MCF 10A (cell line): ENCODE measurements at regions of chr21 and their contacts with region 1.

Region 1: DNA sequence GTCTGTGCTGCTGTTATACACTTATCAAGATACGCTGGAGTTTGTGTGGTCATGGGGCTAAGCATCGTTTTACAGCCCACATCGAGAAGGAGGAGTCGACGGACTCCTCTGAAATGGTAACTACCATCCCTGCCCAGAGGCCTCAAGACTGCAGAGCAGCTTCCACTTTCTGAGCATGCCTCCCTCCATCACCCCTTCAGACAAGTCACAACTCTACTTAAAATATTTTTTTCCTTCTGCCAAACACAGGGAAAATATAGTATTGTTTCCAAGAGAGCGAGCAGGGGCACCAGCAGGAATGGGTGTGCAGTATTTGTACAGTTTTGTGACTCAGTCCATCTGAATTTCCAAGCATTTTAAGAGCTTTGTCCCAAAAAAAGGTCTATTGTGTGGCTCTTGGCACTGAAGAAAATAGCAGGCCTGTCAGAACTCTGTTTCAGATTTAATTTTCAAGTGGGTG is 14.1 kb downstream of the EVA1C start:
- DNase-seq: no peak
- H3K4me3 Mint-ChIP-seq: peak overlapping the region; percentile 50
- H3K27ac Mint-ChIP-seq: peak overlapping the region; percentile 69
- H3K4me1 Mint-ChIP-seq: peaks cover 26% of the 10 kb centered on the region
- H3K27me3 Mint-ChIP-seq: no peaks in the 10 kb centered on the region
- CTCF ChIP-seq: no peak

Region 2: DNA sequence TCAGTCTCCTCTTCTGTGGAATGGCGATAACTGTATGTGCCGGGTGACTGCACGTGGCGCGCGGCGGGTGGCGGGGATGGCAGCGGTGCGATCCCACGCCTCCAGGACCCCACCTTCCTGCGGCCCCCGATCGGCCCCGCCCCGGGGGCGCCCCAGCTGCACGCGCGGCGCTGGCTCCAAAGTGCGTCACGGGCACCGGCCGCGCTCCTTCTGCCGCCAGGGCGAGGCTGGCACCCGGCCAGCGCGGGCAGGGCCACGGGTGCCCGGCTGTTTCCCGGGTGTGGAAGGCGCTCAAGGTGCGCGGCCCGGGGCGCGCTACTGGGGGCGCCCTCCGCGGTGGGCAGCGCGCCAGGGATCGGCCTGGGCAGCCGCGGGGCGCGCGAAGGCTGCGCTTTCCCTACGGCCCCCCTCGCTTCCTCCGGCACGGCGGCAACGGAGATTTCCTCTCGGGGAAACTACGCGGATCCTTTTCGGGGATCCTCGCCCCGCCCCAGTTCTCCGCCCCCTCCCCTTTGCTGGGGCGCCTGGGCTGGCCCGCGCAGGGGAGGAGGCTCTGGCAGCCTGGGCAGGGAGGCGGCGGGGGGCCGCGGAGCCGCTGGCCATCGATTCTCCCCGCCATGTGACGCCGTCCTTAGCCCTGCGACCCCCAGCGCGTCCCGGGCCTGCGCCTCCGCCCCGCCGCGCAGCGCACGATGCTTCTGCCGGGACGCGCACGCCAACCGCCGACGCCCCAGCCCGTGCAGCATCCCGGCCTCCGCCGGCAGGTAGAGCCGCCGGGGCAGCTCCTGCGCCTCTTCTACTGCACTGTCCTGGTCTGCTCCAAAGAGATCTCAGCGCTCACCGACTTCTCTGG is 14.2 kb before region 1 on chr21 and contains the start of gene EVA1C:
- CTCF ChIA-PET with region 1: interaction called, 5 read pairs
- POLR2A ChIA-PET with region 1: interaction called, 22 read pairs
- intact Hi-C with region 1: no loop called
- DNase-seq: peak; percentile 72
- H3K4me3 Mint-ChIP-seq: peak within 1 kb of the TSS; percentile 97
- H3K27ac Mint-ChIP-seq: peak within 1 kb of the TSS; percentile 87
- H3K4me1 Mint-ChIP-seq: peaks cover 44% of the 10 kb centered on the region
- H3K27me3 Mint-ChIP-seq: no peaks in the 10 kb centered on the region
- CTCF ChIP-seq: no peak
- total RNA-seq, gene EVA1C: 16.8 and 22.2 TPM in 2 replicates

Region 3: GRCh38 chr21:32641710-32642698 is 215.4 kb after region 1 on chr21:
- CTCF ChIA-PET with region 1: no interaction called
- POLR2A ChIA-PET with region 1: no interaction called
- intact Hi-C with region 1: no loop called
- DNase-seq: no peak
- H3K4me3 Mint-ChIP-seq: no peak overlapping the region
- H3K27ac Mint-ChIP-seq: no peak overlapping the region
- H3K4me1 Mint-ChIP-seq: no peaks in the 10 kb centered on the region
- H3K27me3 Mint-ChIP-seq: no peaks in the 10 kb centered on the region
- CTCF ChIP-seq: no peak